MCF 10A (cell line): ENCODE measurements at regions of chr19 and their contacts with region 1.

Region 1: DNA sequence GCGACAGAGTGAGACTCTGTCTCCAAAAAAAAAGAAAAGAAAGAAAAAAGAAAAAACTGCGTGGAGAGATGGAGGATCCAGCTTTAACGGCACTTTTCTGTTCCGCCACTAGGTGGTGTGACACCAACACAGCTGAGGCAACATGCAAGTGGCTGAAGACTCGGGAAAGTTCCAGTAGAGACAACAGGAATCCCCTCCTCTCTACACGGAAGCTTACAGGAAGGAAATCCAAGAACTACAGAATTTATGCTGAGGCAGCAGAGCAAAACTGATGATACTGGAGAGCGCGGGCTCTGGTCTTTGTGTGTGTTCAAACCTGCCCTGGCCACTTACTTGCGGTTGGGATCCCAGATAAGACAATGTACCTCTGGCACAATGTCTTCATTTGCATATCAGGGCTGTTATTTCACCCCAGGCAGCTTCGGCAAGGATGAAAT is 9.9 kb downstream of the RANBP3 start:
- DNase-seq: peak; percentile 75
- H3K4me3 Mint-ChIP-seq: peak overlapping the region; percentile 59
- H3K27ac Mint-ChIP-seq: peak overlapping the region; percentile 84
- H3K4me1 Mint-ChIP-seq: peaks cover 32% of the 10 kb centered on the region
- H3K27me3 Mint-ChIP-seq: no peaks in the 10 kb centered on the region
- CTCF ChIP-seq: peak; percentile 77

Region 2: GRCh38 chr19:5914921-5915781 is 52.9 kb before region 1 on chr19:
- CTCF ChIA-PET with region 1: no interaction called
- POLR2A ChIA-PET with region 1: no interaction called
- intact Hi-C with region 1: no loop called
- DNase-seq: no peak
- H3K4me3 Mint-ChIP-seq: no peak overlapping the region
- H3K27ac Mint-ChIP-seq: no peak overlapping the region
- H3K4me1 Mint-ChIP-seq: peaks cover 6% of the 10 kb centered on the region
- H3K27me3 Mint-ChIP-seq: no peaks in the 10 kb centered on the region
- CTCF ChIP-seq: no peak

Region 3: DNA sequence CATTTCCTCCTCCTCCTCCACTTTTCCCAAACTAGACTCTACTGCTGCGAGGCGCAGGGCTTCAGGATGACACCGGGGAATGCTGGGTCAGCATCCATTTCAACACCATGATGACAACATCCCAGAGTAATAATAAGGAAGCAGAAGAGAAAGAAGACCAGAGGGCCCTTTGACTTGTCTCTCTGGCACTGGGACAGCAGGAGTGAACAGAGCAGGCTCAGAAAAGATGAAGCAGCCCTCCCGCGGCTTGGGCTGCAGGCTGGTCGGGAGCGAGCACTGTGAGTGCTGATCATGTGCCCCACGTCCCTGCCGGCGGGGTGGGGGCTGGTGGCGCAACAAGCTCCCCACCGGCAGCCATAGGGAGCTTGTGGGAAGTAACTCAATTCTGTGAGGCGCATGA is 20.6 kb before region 1 on chr19:
- CTCF ChIA-PET with region 1: interaction called, 24 read pairs
- POLR2A ChIA-PET with region 1: interaction called, 3 read pairs
- intact Hi-C with region 1: no loop called
- DNase-seq: no peak
- H3K4me3 Mint-ChIP-seq: no peak overlapping the region
- H3K27ac Mint-ChIP-seq: no peak overlapping the region
- H3K4me1 Mint-ChIP-seq: no peaks in the 10 kb centered on the region
- H3K27me3 Mint-ChIP-seq: no peaks in the 10 kb centered on the region
- CTCF ChIP-seq: no peak

Region 4: GRCh38 chr19:5953680-5954213 is 14.3 kb before region 1 on chr19:
- CTCF ChIA-PET with region 1: interaction called, 48 read pairs
- POLR2A ChIA-PET with region 1: interaction called, 4 read pairs
- intact Hi-C with region 1: no loop called
- DNase-seq: no peak
- H3K4me3 Mint-ChIP-seq: no peak overlapping the region
- H3K27ac Mint-ChIP-seq: peak overlapping the region; percentile 27
- H3K4me1 Mint-ChIP-seq: peaks cover 27% of the 10 kb centered on the region
- H3K27me3 Mint-ChIP-seq: no peaks in the 10 kb centered on the region
- CTCF ChIP-seq: no peak

Region 5: DNA sequence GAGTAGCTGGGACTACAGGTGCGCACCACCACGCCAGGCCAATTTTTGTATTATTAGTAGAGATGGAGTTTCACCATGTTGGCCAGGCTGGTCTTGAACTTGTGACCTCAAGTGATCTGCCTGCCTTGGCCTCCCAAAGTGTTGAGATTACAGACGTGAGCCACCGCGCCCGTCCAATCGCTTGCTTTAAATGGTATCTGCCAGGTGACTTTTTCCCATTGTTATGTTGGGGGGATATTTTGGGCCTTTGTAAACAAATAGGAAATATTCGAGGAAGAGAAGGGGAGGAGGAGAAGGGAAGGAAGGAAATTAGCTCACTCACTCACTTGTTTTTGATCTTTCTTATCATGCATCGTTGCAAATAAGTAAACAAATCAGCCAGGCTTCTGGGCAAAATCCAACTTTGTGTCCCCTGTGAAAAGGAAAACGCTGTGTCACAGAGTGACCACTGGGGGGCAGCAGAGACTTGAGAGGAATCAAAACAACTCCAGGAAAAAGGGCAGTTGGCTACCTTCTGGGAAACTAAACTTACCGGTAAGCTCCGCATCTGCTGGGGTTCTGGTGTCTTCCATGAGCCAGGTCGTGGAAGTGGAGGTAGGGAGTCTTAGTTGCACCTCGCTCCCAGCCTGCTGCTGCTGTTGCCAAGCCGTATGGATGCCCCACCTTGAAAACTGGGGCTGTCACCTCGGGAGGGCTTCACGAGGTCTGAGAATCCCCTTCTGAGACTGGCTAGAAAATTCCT is 19.2 kb after region 1 on chr19:
- CTCF ChIA-PET with region 1: interaction called, 15 read pairs
- POLR2A ChIA-PET with region 1: interaction called, 4 read pairs
- intact Hi-C with region 1: no loop called
- DNase-seq: peak; percentile 84
- H3K4me3 Mint-ChIP-seq: peak overlapping the region; percentile 47
- H3K27ac Mint-ChIP-seq: no peak overlapping the region
- H3K4me1 Mint-ChIP-seq: peaks cover 14% of the 10 kb centered on the region
- H3K27me3 Mint-ChIP-seq: no peaks in the 10 kb centered on the region
- CTCF ChIP-seq: peak; percentile 89

Region 6: GRCh38 chr19:6014551-6015135 is 46.6 kb after region 1 on chr19:
- CTCF ChIA-PET with region 1: no interaction called
- POLR2A ChIA-PET with region 1: no interaction called
- intact Hi-C with region 1: no loop called
- DNase-seq: no peak
- H3K4me3 Mint-ChIP-seq: no peak overlapping the region
- H3K27ac Mint-ChIP-seq: no peak overlapping the region
- H3K4me1 Mint-ChIP-seq: no peaks in the 10 kb centered on the region
- H3K27me3 Mint-ChIP-seq: no peaks in the 10 kb centered on the region
- CTCF ChIP-seq: no peak